ENCODE measurements at regions of chr3 and their contacts with region 1.

Region 1: GRCh38 chr3:121834696-121835464 is at the starts of genes EAF2 and IQCB1:
- DNase-seq: peak; percentile 97
- H3K4me3 Mint-ChIP-seq: peak within 1 kb of the TSS; percentile 95
- H3K27ac Mint-ChIP-seq: peak within 1 kb of the TSS; percentile 88
- H3K4me1 Mint-ChIP-seq: peaks cover 36% of the 10 kb centered on the region
- H3K27me3 Mint-ChIP-seq: no peaks in the 10 kb centered on the region
- total RNA-seq, gene EAF2: 8.2 to 9.3 TPM
- total RNA-seq, gene IQCB1: 36.5 to 37.8 TPM

Region 2: GRCh38 chr3:120742198-120742849 is 1092.6 kb before region 1 on chr3 and contains the starts of genes GTF2E1 and RABL3:
- CTCF ChIA-PET with region 1: no interaction called
- intact Hi-C with region 1: loop called (anchors 10 kb)
- DNase-seq: peak; percentile 98
- H3K4me3 Mint-ChIP-seq: peak within 1 kb of the TSS; percentile 90
- H3K27ac Mint-ChIP-seq: peak within 1 kb of the TSS; percentile 96
- H3K4me1 Mint-ChIP-seq: peaks cover 33% of the 10 kb centered on the region
- H3K27me3 Mint-ChIP-seq: no peaks in the 10 kb centered on the region
- total RNA-seq, gene GTF2E1: 13.2 TPM
- total RNA-seq, gene RABL3: 34.7 to 36.8 TPM

Region 3: GRCh38 chr3:121735047-121735696 is 99.7 kb before region 1 on chr3:
- CTCF ChIA-PET with region 1: no interaction called
- intact Hi-C with region 1: loop called (anchors 1 kb)
- DNase-seq: no peak
- H3K4me3 Mint-ChIP-seq: no peak overlapping the region
- H3K27ac Mint-ChIP-seq: peak overlapping the region; percentile 0
- H3K4me1 Mint-ChIP-seq: peaks cover 38% of the 10 kb centered on the region
- H3K27me3 Mint-ChIP-seq: no peaks in the 10 kb centered on the region

Region 4: DNA sequence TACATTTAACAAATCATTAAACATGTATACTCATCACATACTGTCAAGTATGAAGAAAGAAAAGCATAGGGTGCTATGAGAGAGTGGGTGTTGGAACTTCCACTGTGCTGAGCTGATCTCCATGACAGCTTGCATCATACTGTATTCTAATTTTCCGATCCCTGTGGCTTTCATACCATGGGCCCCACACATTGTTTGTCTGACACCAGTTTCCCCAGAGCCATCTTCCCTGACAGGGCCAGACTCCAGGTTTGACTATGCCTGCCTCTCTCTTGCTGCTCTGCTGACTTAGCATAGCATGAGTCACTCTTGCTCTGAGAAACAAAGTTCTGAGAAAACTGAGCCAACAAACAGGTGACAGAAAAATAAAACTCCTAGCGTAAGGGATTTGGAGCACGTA is 311.6 kb after region 1 on chr3:
- CTCF ChIA-PET with region 1: no interaction called
- intact Hi-C with region 1: loop called (anchors 1 kb)
- DNase-seq: peak; percentile 86
- H3K4me3 Mint-ChIP-seq: no peak overlapping the region
- H3K27ac Mint-ChIP-seq: peak overlapping the region; percentile 46
- H3K4me1 Mint-ChIP-seq: peaks cover 28% of the 10 kb centered on the region
- H3K27me3 Mint-ChIP-seq: peaks cover 1% of the 10 kb centered on the region

Region 5: DNA sequence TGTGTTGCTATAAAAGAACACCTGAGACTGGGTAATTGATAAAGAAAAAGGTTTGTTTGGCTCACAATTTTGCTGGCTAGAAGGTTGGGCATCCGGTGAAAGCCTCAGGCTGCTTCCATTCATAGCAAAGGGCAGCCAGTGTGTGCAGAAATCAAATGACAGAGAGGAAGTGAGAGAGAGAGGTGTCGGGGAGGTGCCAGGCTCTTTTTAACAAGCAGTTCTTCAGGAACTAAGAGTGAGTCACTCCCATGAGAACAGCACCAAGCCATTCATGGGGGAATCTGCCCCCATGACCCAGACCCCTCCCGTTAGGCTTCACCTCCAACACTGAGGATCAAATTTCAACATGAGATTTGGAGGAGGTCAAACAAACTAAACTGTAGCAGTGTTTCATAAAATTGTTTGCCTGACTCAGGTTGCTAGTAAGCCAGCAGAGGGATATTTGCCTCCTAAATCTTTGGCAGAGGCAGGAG is 738.1 kb after region 1 on chr3:
- CTCF ChIA-PET with region 1: no interaction called
- intact Hi-C with region 1: loop called (anchors 5 kb)
- DNase-seq: peak; percentile 75
- H3K4me3 Mint-ChIP-seq: no peak overlapping the region
- H3K27ac Mint-ChIP-seq: peak overlapping the region; percentile 73
- H3K4me1 Mint-ChIP-seq: peaks cover 69% of the 10 kb centered on the region
- H3K27me3 Mint-ChIP-seq: no peaks in the 10 kb centered on the region